Heart left ventricle (tissue), 16 donors: ENCODE measurements at regions of chr4 and their contacts with region 1.

Region 1: GRCh38 chr4:25030277-25031076 is at the start of gene LGI2:
- DNase-seq: peak; percentile 58 to 77 (median 67)
- ATAC-seq: peak in 3 of 4 donors; percentile 70 to 86 (median 81)
- H3K4me3 ChIP-seq: peak within 1 kb of the TSS; percentile 37 to 76 (median 61)
- H3K27ac ChIP-seq: peak within 1 kb of the TSS in 7 of 12 donors; percentile 14 to 70 (median 54)
- H3K4me1 ChIP-seq: peaks cover 0 to 16% (median 4%) of the 10 kb centered on the region in 12 donors
- H3K27me3 ChIP-seq: peaks cover 0 to 39% (median 0%) of the 10 kb centered on the region in 9 donors
- CTCF ChIP-seq: no peak
- POLR2A ChIP-seq: no peak
- total RNA-seq, gene LGI2: 0.50 to 10.6 (median 2.7) TPM

Region 2: GRCh38 chr4:24799544-24800324 is 230.7 kb before region 1 on chr4:
- intact Hi-C with region 1: no loop called
- DNase-seq: no peak
- ATAC-seq: no peak
- H3K4me3 ChIP-seq: peak overlapping the region in 10 of 12 donors; percentile 1 to 50 (median 34)
- H3K27ac ChIP-seq: peak overlapping the region in 1 of 12 donors; percentile 62
- H3K4me1 ChIP-seq: peaks cover 0 to 45% (median 25%) of the 10 kb centered on the region in 12 donors
- H3K27me3 ChIP-seq: peaks cover 0 to 21% (median 6%) of the 10 kb centered on the region in 9 donors
- CTCF ChIP-seq: no peak
- POLR2A ChIP-seq: no peak

Region 3: DNA sequence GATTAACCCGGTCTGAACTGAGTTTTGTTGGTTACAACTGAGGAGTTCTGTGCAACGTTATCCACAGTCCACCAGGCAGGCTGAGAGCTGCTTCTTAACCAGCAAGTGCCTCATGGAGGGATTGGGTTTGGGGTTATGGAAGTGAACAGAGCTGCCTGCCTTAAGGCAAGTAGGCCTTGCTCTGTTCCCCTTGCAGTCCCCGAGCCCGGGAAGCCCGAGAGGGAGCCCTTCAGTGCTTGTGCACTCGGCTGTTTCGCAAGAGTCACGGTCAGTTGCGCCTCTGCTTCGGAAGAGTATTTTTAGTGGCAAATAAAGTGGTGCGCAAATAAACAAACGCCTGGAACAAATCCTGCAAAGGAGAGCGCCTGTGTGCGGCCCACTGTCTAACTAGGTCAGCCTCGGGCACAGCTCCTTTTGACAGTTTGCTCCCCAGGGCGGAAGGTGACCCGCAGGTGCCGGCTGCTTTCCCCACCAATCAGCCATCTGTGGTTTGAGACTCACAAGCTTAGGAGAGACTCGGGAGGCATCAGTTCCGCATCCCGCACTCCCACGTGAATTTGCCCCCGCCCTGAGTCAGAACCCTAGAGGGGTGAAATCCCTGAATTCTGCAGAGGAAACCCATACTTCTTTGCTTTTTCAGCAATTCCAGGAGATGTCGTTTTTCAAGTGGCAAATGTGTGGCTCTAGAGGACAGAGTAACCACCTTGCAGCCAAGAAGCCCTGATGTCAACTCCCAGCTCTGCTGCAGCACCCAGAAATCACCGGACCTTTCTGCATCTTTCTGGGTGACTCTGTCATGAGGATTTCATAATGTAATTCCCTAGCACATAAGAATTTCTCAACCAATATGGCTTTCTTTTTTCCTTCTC is 56.5 kb before region 1 on chr4:
- intact Hi-C with region 1: no loop called
- DNase-seq: peak; percentile 51 to 83 (median 63)
- ATAC-seq: peak in 3 of 4 donors; percentile 38 to 51 (median 51)
- H3K4me3 ChIP-seq: peak overlapping the region in 1 of 12 donors; percentile 4
- H3K27ac ChIP-seq: peak overlapping the region in 4 of 12 donors; percentile 9 to 90 (median 27)
- H3K4me1 ChIP-seq: peaks cover 0 to 33% (median 7%) of the 10 kb centered on the region in 12 donors
- H3K27me3 ChIP-seq: no peaks in the 10 kb centered on the region
- CTCF ChIP-seq: no peak
- POLR2A ChIP-seq: no peak

Region 4: DNA sequence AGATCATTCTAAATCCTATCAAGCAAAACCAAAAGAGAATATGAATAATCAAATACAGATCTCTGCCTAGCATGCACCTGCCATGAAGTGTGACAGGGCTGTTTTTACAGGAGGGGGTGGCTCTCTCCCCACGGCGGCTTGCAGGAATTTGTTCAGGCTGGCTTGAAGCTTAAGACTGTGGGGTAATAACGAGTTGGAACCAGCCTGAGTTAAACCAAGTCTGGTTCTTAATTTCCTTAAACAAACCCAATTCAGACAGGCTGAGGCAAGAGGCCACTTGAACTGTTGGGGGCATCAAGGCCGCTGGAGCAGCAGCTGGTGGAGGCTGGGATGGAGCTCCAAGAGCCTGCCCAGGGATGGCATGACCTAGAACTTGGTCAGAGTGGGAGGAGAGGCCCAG is 45.4 kb after region 1 on chr4:
- intact Hi-C with region 1: loop called in 1 of 10 experiments (anchors 5 kb)
- DNase-seq: no peak
- ATAC-seq: no peak
- H3K4me3 ChIP-seq: no peak overlapping the region
- H3K27ac ChIP-seq: no peak overlapping the region
- H3K4me1 ChIP-seq: peaks cover 0 to 8% (median 0%) of the 10 kb centered on the region in 12 donors
- H3K27me3 ChIP-seq: no peaks in the 10 kb centered on the region
- CTCF ChIP-seq: no peak
- POLR2A ChIP-seq: no peak

Region 5: DNA sequence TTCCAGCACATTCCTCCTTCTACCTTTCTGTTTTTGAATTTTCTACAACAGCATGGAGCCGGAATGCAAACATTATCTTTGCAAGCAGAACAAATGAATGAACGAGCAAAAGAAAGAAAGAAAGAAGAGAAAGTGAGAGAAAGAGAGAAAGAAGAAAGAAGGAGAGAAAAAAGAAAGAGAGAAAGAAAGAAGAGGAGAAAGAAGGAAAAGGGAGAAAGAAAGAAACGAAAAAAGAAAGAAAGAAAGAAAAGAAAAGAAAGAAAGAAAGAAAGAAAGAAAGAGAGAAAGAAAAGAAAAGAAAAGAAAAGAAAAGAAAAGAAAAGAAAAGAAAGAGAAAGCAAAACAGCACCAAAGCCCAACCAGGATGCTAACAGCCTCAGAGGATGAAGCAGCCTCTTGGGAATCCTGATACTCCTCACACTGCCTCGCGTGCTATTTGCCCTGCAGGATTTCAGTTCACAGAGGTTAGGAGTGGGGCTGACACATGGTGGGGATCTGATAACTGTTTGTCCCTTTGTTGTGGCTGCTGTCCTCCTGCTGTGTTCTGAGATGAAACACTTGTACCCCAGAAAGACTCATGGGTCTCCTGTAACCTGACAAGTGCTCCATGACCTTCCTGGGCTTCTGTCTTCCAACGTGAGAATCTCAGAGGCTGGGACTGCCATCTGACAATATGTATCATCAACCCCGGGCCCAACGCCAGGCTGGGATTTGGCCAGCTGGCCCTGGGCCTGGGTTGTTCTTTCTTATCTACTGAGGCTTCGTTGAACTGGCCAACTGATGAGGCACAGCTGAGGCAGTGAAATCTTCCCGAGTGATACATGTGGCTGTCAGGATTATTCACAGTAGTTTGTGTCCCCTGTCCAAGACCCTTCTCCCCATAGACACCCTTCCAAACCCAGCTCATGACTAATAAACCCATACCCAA is 68.8 kb after region 1 on chr4:
- intact Hi-C with region 1: loop called in 1 of 10 experiments (anchors 10 kb)
- DNase-seq: peak; percentile 78 to 89 (median 87)
- ATAC-seq: peak; percentile 79 to 92 (median 90)
- H3K4me3 ChIP-seq: no peak overlapping the region
- H3K27ac ChIP-seq: peak overlapping the region; percentile 40 to 87 (median 79)
- H3K4me1 ChIP-seq: peaks cover 0 to 37% (median 26%) of the 10 kb centered on the region in 12 donors
- H3K27me3 ChIP-seq: no peaks in the 10 kb centered on the region
- CTCF ChIP-seq: no peak
- POLR2A ChIP-seq: no peak